Transverse colon (tissue), 4 donors: ENCODE measurements at regions of chr1 and their contacts with region 1.

Region 1: DNA sequence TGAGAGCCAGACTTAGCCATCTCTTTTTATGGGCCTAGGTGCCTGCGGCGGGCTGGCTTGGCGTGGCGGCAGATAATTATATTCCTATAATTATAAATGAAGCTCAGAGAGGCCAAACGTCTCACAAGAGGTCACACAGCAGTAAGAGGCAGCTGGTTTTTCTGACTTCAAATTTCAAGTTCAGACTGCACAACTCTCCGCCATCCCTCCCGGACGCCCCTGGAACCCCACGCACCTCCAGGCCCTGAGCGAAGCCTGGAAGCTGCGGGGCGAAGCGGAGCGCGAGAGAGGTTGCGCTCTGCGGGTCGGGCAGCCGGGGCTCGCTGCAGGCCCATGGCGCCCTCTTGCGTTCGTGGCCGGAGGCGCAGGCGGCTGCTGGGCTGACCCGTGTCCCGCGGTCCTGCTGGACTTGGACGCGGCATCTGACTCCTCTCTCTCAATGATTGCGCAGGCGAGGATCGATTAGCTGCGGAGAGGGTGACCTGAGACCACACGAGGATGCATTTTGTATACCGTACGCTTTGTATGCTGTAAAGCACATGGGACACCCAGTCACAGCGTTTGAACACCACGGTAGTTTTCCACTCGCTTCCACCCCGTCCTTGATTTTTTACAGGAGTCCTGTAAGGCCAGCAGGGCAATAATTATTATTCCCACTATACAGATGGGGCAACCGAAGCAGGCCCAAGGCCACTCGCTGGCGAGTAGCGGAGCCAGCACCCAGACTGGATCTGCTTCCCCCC is 272.7 kb downstream of the FOXD2 start:
- DNase-seq: peak; percentile 85
- H3K4me3 ChIP-seq: peak overlapping the region in 3 of 4 donors; percentile 28 to 56 (median 40)
- H3K27ac ChIP-seq: peak overlapping the region; percentile 72 to 86 (median 78)
- H3K4me1 ChIP-seq: peaks cover 10 to 26% (median 22%) of the 10 kb centered on the region in 4 donors
- H3K27me3 ChIP-seq: peaks cover 70% of the 10 kb centered on the region
- CTCF ChIP-seq: peak; percentile 92 to 99 (median 97)
- EP300 ChIP-seq: no peak
- POLR2A ChIP-seq: no peak

Region 2: DNA sequence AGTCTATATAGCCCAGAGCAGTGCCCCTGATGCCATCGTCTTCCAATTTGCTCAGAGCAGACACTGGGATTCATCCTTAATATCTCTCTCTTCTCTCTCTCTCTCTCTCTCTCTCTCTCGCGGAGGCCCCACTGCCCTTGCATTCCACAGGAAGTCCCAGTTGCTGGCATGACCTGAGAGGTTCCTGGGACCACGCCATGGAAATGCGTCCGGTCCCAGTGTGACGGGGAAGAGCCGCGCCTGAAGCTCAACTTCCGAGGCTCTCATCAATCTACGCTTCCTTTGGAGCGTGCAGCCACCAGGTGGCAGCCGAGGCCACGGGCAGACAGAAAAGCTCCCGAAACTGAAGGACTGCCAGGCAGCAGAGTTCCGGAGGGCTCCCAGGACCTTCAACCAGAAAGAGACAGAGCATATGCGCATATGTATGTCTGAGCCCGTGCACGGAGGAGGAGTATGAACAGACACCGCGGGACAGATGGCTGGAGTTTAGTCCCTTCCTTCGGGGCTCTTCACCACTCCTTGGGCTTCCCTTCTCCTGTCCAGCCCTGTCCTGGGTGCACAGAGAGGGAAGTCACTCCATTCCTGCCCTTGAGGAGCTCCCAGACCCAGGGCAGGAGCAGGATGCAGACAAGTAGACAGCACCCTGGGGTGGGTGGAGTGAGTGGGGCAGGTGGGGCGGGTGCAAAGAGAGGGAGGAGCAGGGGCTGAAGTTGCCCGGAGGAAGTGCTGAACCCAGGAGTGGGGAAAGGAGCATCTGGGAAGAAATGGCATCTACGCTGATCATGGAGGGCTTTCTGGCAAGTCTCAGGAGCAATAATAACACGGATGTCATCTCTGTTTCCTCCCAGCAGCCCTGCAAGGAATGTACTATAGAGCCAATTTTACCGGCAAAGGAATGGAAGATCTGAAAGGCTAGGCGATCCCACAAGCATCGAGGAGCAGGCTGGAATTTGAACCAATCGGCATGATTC is 531.2 kb before region 1 on chr1:
- in situ Hi-C with region 1: loop called (anchors 25 kb)
- intact Hi-C with region 1: loop called (anchors 5 kb)
- DNase-seq: peak; percentile 92
- H3K4me3 ChIP-seq: peak overlapping the region; percentile 6 to 48 (median 32)
- H3K27ac ChIP-seq: peak overlapping the region; percentile 69 to 80 (median 74)
- H3K4me1 ChIP-seq: peaks cover 9 to 15% (median 12%) of the 10 kb centered on the region in 4 donors
- H3K27me3 ChIP-seq: peaks cover 10% of the 10 kb centered on the region
- CTCF ChIP-seq: peak; percentile 81 to 93 (median 90)
- EP300 ChIP-seq: no peak
- POLR2A ChIP-seq: peak; percentile 51

Region 3: GRCh38 chr1:47432071-47433036 is 278.1 kb before region 1 on chr1:
- in situ Hi-C with region 1: loop called in 3 of 4 experiments (anchors 5 to 25 kb)
- intact Hi-C with region 1: loop called (anchors 2 kb)
- DNase-seq: peak; percentile 88
- H3K4me3 ChIP-seq: peak overlapping the region in 3 of 4 donors; percentile 22 to 47 (median 36)
- H3K27ac ChIP-seq: peak overlapping the region; percentile 60 to 95 (median 91)
- H3K4me1 ChIP-seq: peaks cover 10 to 55% (median 39%) of the 10 kb centered on the region in 4 donors
- H3K27me3 ChIP-seq: peaks cover 77% of the 10 kb centered on the region
- CTCF ChIP-seq: peak; percentile 61 to 87 (median 75)
- EP300 ChIP-seq: no peak
- POLR2A ChIP-seq: peak; percentile 34

Region 4: DNA sequence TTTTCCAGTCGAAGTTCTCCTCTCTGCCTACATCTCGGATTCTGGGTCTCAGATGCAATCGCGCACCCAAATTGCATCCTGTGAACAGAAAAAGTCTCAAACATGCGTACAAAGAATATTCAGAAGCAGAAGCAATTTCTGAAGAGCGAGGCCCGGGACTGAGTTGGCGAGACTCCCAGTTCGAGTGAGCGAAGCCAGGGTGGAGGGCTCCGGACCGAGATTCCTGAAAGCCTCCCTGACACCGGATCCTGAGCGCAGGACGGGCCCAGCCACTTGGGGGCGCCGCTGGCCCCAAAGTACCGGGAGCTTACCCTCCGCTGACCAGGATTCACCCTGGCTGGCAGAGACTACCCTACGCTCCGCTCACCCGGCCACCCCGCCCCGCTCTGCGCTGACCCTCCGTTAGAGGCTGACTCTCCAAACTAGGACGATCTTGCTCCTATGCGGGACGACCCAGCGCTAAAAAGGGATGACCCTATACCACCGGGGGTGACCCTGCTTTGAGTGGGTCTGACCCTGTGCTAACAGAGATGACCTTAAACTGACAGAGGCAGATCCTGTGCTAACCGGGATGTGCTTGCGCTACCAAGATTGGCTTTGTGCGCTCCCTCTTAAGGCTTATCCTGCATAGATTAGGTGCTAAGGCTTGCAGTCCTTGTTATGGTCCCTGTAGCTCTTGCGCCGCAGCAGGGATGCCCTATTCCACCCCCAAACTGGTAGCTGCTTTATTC is 260.5 kb before region 1 on chr1:
- in situ Hi-C with region 1: loop called in 2 of 4 experiments (anchors 10 to 25 kb)
- intact Hi-C with region 1: no loop called
- DNase-seq: peak; percentile 40
- H3K4me3 ChIP-seq: no peak overlapping the region
- H3K27ac ChIP-seq: no peak overlapping the region
- H3K4me1 ChIP-seq: peaks cover 0 to 7% (median 5%) of the 10 kb centered on the region in 4 donors
- H3K27me3 ChIP-seq: peaks cover 74% of the 10 kb centered on the region
- CTCF ChIP-seq: peak; percentile 33 to 56 (median 37)
- EP300 ChIP-seq: no peak
- POLR2A ChIP-seq: no peak

Region 5: DNA sequence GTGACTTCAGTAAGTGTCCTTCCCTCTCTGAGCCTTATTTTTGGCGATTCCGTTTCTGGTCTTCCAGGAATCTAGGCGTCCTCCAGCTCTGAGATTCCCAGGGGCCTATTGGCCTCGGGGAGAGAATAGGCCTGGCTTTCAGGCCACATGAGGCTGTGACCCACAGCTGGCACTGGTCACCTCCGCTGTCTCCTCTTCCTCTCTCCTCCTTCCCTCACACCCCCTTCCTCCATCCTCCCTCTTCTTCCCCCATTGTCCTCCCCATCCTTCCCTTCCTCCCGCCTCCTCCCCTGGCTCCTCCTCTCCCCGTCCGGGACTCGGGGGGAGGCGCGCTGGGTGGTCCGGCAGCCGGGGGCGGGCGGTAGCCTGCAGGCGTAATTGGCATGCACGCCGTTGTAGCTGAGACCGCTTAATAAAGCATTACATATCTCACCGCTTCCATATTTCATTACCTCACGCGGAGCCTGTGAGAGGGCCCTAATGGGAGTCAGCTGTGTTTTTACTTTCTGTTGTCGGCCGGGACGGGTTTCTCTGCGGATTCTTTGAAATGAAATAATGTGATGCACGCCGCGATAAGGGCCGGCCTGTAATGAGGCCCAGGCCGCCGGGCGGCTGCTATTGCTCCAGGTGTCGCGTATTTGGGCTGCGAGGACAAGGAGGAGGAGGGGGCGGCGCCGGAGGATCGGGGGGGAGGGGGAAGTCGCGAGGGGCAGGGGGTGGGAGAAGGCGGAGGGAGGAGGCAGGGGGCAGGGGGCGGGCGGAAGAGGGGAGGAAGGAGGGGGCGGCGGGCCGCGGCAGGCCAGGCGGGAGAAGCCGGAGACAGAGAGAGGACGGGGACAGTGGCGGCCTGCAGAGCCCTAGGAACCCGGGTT is 177.3 kb before region 1 on chr1:
- in situ Hi-C with region 1: loop called in 3 of 4 experiments (anchors 10 to 25 kb)
- intact Hi-C with region 1: loop called (anchors 5 kb)
- DNase-seq: peak; percentile 34
- H3K4me3 ChIP-seq: peak overlapping the region; percentile 3 to 45 (median 30)
- H3K27ac ChIP-seq: peak overlapping the region in 1 of 4 donors; percentile 22
- H3K4me1 ChIP-seq: peaks cover 7 to 23% (median 14%) of the 10 kb centered on the region in 4 donors
- H3K27me3 ChIP-seq: no peaks in the 10 kb centered on the region
- CTCF ChIP-seq: no peak
- EP300 ChIP-seq: no peak
- POLR2A ChIP-seq: no peak